ENCODE measurements at regions of chr19 and their contacts with region 1.

Region 1: GRCh38 chr19:50777754-50778303 is 7.6 kb downstream of the GPR32 start:
- DNase-seq: peak; percentile 28
- H3K4me3 ChIP-seq: no peak overlapping the region
- H3K27ac ChIP-seq: no peak overlapping the region
- H3K4me1 ChIP-seq: peaks cover 7% of the 10 kb centered on the region
- H3K27me3 ChIP-seq: peaks cover 16% of the 10 kb centered on the region
- CTCF ChIP-seq: no peak

Region 2: DNA sequence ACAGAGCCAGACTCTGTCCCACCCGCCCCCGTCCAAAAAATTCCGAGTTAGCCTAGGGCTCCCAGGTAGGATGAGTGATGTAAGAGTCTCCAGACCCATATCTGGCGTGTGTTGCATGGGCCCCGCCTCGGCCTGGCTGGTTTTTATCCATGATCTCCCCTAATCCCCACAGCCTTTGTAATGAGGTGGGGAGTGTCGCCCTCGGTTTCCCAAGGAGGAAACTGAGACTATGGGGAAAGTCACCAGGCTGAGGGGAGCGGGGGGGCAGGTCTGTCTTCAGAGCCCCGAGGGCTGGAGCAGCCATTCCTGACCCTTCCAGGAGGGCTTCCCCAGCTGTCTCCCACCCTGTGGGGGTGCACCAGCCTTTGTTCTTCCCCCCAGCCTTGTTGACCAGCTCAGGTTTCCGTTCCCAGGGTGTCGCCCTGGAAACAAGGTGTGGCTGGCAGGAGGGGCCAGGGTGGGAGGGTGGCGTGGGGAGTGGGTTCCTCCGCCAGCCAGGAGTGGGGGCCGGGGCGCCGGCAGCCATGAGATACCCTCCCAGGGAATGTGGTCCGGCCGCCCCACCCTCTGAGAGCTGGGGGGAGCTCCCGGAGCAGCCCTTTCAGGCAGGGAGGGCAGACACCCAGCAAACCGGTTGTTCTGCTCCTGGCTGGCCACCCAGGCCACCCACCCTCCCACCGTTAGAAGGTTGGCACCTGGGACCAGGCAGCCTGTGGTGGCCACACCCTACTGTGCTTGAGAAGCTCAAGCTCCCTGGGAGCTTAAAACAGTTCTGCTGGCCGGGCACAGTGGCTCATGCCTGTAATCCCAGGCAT is 562.9 kb before region 1 on chr19:
- CTCF ChIA-PET with region 1: no interaction called
- dilution Hi-C with region 1: no loop called
- in situ Hi-C with region 1: no loop called
- intact Hi-C with region 1: no loop called
- DNase-seq: no peak
- H3K4me3 ChIP-seq: no peak overlapping the region
- H3K27ac ChIP-seq: no peak overlapping the region
- H3K4me1 ChIP-seq: no peaks in the 10 kb centered on the region
- H3K27me3 ChIP-seq: no peaks in the 10 kb centered on the region
- CTCF ChIP-seq: no peak

Region 3: DNA sequence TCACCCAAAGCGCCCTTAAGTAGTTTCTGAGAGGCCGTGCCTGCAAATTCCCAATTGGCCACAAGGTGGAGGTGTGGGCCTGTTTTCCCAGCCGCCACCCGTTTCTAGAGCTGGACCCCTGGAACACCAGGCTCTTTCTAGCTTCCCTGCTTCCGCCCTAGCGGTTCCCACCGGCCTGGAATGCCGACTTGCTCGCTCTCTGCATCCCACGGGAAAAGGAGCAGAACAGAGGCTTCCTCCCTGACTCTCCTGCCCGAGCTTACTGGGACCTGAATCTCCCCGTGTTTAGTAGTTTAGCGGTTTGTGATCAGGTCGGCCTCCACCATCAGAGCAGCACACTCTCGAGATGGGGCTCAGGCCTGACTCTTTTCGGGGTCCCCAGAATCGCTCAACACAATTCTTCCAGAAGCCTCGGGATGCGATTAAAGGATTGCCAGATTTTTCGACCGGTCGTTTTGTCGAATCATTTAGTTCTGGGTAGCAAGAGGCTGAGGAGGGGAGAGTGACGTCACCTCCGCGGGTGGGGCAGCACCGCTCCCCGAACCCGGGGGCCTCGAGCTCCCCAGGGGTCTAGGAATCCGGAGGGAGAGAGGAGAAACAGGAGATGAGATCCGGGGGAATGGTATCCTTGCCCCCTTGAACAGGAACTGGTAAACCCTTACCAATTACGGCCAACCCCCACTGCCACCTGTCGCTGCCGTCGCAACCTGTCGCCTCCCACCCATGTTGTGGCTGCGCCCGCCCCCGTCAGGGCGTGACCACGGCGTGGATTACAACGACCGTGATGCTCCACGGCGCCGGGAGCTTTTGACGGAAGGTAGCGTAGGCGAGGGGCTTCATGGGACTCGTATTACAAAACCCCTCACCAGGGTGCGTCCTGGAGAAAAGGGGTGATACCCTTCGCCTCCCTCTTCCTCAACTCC is 420.4 kb before region 1 on chr19:
- CTCF ChIA-PET with region 1: no interaction called
- dilution Hi-C with region 1: no loop called
- in situ Hi-C with region 1: loop called (anchors 10 kb)
- intact Hi-C with region 1: loop called (anchors 1 kb)
- DNase-seq: peak; percentile 34
- H3K4me3 ChIP-seq: peak overlapping the region; percentile 16 to 53 (median 17)
- H3K27ac ChIP-seq: no peak overlapping the region
- H3K4me1 ChIP-seq: peaks cover 6% of the 10 kb centered on the region
- H3K27me3 ChIP-seq: no peaks in the 10 kb centered on the region
- CTCF ChIP-seq: peak; percentile 65 to 79

Region 4: GRCh38 chr19:50368649-50369570 is 408.9 kb before region 1 on chr19:
- CTCF ChIA-PET with region 1: no interaction called
- dilution Hi-C with region 1: no loop called
- in situ Hi-C with region 1: loop called (anchors 10 kb)
- intact Hi-C with region 1: loop called (anchors 1 kb)
- DNase-seq: peak; percentile 73
- H3K4me3 ChIP-seq: peak overlapping the region; percentile 72 to 75 (median 74)
- H3K27ac ChIP-seq: peak overlapping the region; percentile 36
- H3K4me1 ChIP-seq: peaks cover 5% of the 10 kb centered on the region
- H3K27me3 ChIP-seq: no peaks in the 10 kb centered on the region
- CTCF ChIP-seq: peak; percentile 68 to 82

Region 5: DNA sequence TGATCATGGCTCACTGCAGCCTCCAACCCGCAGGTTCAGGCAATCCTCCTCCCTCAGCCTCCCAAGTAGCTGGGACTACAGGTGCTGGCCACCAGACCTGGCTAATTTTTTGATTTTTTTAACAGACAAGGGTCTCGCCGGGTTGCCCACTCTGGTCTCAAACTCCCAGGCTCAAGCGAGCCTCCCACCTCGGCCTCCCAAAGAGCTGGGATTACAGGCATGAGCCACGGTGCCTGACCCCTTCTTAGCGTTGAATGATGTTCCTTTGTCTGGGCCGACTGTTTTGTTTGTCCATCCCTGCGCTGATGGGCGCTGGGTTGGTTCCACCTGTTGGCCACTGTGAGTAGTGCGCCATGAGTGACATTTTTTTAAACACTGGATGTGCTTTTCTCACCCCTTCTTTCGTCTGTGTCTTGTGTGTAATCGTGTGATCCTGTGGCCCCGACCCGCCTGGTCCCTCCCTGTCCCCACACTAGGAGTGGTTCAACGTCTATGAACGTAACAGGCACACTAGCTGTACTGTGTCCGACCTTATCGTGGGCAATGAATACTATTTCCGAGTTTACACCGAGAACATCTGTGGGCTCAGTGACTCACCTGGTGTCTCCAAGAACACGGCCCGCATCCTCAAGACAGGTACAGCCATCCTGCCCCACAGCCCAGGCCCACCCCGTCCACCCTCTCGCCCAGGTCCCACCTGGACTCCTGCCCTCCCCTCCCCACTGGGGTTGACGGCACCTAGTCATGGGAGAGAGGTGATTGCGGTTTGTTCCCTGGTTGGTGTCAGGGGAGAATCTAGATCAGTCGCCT is 316.6 kb before region 1 on chr19:
- CTCF ChIA-PET with region 1: no interaction called
- dilution Hi-C with region 1: no loop called
- in situ Hi-C with region 1: no loop called
- intact Hi-C with region 1: loop called (anchors 2 kb)
- DNase-seq: peak; percentile 42
- H3K4me3 ChIP-seq: no peak overlapping the region
- H3K27ac ChIP-seq: no peak overlapping the region
- H3K4me1 ChIP-seq: no peaks in the 10 kb centered on the region
- H3K27me3 ChIP-seq: peaks cover 4% of the 10 kb centered on the region
- CTCF ChIP-seq: peak; percentile 86 to 90

Region 6: DNA sequence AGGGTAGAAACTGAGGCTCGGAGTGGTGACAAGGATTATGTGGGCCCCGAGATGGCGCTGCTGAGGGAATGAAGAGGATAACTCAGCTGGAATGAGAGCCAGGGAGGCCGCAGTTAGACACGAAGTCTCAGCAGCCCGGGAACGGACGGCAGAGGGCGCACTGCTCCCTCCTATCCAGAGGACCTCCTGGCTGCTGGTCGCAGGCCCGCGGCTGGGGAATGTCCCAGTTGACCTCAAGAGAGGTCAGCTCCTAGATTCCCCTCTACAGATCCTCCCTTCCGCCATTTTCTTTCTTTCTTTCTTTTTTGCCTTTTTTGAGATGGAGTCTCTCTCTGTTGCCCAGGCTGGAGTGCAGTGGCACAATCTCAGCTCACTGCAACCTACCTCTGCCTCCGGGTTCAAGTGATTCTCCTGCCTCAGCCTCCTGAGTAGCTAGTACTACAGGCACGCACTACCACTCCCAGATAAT is 240.0 kb before region 1 on chr19:
- CTCF ChIA-PET with region 1: no interaction called
- dilution Hi-C with region 1: no loop called
- in situ Hi-C with region 1: loop called (anchors 10 to 25 kb)
- intact Hi-C with region 1: loop called (anchors 1 kb)
- DNase-seq: peak; percentile 58
- H3K4me3 ChIP-seq: no peak overlapping the region
- H3K27ac ChIP-seq: no peak overlapping the region
- H3K4me1 ChIP-seq: no peaks in the 10 kb centered on the region
- H3K27me3 ChIP-seq: no peaks in the 10 kb centered on the region
- CTCF ChIP-seq: peak; percentile 87

Region 7: DNA sequence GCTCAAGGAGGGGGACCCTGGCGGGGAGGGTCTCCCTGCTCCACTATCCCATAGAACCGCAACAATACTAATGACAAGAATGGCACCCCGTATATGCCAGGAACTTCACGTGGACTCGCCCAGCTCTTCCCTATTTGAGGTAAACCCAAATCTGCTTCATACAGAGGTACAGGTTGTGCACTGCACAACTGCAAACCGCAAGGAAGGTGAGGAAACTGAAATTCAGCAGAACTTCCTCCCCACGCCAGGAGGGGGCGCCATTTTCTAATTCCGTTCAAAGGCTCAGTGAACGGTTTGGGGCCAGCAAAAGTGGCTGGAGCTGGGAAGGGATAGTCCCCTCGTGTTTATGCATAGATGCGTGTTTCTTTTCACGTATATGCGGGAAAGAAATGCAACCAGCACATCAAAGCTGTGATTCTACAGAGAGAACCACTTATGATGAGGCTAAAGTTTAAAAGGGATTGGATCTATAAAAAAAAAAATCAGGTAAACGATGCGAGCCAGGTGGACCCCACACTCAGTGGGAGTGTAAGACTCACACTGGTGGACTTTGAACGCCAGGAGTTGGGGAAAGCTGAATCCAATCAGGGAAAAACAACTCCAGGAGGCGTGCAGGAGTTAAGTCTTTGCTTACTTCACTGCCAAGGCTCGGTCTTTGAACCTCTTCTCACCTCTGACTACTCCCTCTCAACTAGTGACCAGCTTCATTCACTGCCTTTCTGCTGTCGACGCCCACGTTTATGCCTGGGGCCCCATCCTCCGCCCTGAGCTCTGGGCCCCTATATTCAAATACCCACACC is 108.3 kb before region 1 on chr19:
- CTCF ChIA-PET with region 1: no interaction called
- dilution Hi-C with region 1: no loop called
- in situ Hi-C with region 1: no loop called
- intact Hi-C with region 1: loop called (anchors 2 kb)
- DNase-seq: no peak
- H3K4me3 ChIP-seq: no peak overlapping the region
- H3K27ac ChIP-seq: no peak overlapping the region
- H3K4me1 ChIP-seq: no peaks in the 10 kb centered on the region
- H3K27me3 ChIP-seq: peaks cover 30% of the 10 kb centered on the region
- CTCF ChIP-seq: peak; percentile 78 to 79

Region 8: GRCh38 chr19:50705422-50706019 is 72.3 kb before region 1 on chr19:
- CTCF ChIA-PET with region 1: interaction called, 4 read pairs
- dilution Hi-C with region 1: no loop called
- in situ Hi-C with region 1: no loop called
- intact Hi-C with region 1: loop called (anchors 1 kb)
- DNase-seq: peak; percentile 50
- H3K4me3 ChIP-seq: no peak overlapping the region
- H3K27ac ChIP-seq: no peak overlapping the region
- H3K4me1 ChIP-seq: no peaks in the 10 kb centered on the region
- H3K27me3 ChIP-seq: peaks cover 3% of the 10 kb centered on the region
- CTCF ChIP-seq: peak; percentile 68 to 84

Region 9: GRCh38 chr19:50794439-50795237 is 16.8 kb after region 1 on chr19:
- CTCF ChIA-PET with region 1: no interaction called
- dilution Hi-C with region 1: no loop called
- in situ Hi-C with region 1: no loop called
- intact Hi-C with region 1: no loop called
- DNase-seq: peak; percentile 43
- H3K4me3 ChIP-seq: no peak overlapping the region
- H3K27ac ChIP-seq: no peak overlapping the region
- H3K4me1 ChIP-seq: no peaks in the 10 kb centered on the region
- H3K27me3 ChIP-seq: no peaks in the 10 kb centered on the region
- CTCF ChIP-seq: peak; percentile 20 to 47

Measured in mammary epithelial cell (primary cell).